ENCODE measurements at regions of chr11 and their contacts with region 1.

Region 1: DNA sequence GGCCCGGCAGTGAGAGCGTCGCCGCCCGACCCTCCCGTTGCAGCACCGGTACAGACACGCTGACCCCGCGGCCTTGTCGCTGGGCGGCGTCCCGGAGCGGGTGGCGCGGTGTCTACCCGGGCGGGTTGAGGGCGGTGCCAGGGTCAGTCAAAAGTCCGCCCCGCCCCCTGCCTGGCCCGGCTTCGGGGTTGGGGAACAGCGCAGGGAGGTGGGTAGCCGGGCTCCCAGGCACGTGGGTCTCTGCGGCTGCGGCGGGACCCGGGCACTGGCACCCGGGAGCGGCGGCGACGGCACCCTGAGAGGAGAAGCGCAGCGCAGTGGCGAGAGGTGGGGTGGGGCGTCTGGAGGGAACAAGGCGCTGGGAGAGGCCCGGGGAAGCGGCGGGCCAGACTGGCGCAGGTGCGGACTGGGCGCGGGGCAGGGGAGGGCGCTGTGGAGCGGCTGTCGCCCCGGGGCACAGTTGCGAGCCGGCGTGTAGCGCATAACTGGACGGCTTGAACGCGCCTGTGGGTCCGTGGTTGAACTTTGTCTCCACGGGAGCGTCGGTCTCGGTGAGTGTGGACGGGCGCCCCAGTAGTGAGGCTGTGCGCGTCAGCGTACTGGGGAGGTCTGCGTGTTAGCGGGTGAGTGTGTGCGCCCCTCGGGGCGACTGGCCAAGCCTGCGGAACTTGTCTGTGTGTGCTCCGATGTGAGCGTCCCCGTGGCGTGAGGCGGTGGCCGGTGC is at the start of gene P2RY2:
- DNase-seq: peak; percentile 52
- H3K4me3 Mint-ChIP-seq: peak within 1 kb of the TSS; percentile 49
- H3K27ac Mint-ChIP-seq: no peak within 1 kb of the TSS
- H3K4me1 Mint-ChIP-seq: peaks cover 4% of the 10 kb centered on the region
- H3K27me3 Mint-ChIP-seq: peaks cover 15% of the 10 kb centered on the region
- total RNA-seq, gene P2RY2: not detected

Region 2: DNA sequence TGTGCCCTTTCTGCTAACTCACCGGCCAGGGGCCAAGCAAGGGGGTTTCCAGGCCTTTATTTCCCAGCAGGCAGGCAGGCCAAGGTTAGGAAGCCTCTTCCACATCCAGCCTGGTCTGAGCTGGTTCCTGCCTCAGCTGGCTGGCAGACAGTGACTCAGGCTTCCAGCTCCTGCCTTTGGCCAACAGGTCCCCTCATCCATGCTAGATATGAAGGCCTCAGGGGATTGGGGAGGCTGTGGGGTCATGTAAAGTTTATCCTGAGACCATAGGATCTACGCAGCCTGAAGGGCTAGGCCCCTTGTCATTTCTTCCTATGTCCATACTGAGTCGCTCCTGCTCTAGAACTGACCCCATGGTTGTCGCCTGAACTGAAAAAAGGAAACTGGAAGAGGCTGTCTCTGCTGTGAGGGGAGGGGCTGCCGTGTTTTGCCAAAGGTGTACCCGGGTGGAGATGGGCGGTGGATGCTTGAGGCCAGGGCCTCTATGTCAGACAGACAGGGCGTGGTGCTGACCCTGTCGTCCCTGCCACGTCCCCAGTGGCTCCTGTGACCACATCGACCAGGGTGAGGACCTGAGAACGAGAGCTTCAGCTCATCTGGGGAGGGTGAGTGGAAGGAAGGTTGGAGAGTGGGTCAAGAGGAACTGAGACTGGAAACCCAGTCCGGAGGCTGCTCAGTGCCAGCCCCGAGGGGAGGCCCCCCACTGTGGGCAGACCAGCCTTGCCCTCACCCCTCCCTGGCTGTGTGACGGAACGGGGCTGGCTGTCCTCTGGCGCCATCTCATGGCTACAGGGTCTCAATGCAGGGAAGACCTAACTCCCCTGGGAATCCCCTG is 70.8 kb after region 1 on chr11:
- CTCF ChIA-PET with region 1: no interaction called
- intact Hi-C with region 1: loop called (anchors 10 kb)
- DNase-seq: peak; percentile 76
- H3K4me3 Mint-ChIP-seq: no peak overlapping the region
- H3K27ac Mint-ChIP-seq: no peak overlapping the region
- H3K4me1 Mint-ChIP-seq: peaks cover 12% of the 10 kb centered on the region
- H3K27me3 Mint-ChIP-seq: no peaks in the 10 kb centered on the region